Esophagus squamous epithelium (tissue), 5 donors: ENCODE measurements at regions of chr5 and their contacts with region 1.

Region 1: DNA sequence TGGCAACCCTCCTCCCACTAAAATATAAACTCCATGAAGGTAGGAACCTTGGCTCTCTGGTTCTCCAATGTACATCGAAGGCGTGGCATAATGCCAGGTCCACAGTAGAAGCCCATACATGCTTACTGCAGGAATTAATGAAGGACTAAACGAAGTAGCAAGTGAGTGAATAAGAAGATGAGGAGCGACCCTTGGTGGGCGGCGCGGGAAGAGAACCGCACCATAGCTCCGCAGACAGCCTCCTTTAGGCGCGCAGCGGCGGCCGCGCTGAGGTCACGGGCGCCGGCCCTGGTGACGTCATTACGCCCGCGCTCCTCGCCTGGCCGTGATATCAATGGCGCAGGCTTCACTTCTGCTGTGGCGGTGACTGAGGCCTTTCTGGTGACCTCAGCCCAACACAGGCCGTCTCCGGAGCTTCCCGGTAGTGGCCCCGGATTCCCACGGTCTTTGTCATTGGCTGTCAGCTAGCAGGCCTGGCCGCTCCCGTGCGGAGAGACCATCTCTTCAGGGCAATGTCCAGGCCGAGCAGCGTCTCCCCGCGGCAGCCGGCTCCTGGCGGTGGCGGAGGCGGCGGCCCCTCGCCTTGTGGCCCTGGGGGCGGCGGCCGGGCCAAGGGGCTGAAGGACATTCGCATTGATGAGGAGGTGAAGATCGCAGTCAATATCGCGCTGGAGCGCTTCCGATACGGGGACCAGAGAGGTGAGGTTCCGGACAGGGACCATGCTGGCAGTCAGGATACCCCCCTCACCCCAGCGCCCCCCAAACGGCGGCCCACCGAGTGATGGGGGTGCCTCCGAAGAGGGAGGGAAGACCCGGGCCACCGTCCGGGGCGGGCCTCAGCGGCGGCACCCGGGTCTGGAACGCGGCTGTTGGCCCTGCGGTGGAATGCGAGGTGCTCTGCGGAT is at the start of gene YTHDC2:
- DNase-seq: peak; percentile 45
- H3K4me3 ChIP-seq: peak within 1 kb of the TSS; percentile 70 to 97 (median 87)
- H3K27ac ChIP-seq: peak within 1 kb of the TSS; percentile 91 to 97 (median 94)
- H3K4me1 ChIP-seq: peaks cover 6 to 43% (median 8%) of the 10 kb centered on the region in 3 donors
- H3K27me3 ChIP-seq: peaks cover 0 to 5% (median 0%) of the 10 kb centered on the region in 4 donors
- CTCF ChIP-seq: peak in 3 of 6 experiments; percentile 1 to 22 (median 20)
- POLR2A ChIP-seq: peak in 2 of 4 donors; percentile 42 to 72
- total RNA-seq, gene YTHDC2: 12.4 to 33.4 (median 23.7) TPM

Region 2: GRCh38 chr5:113022661-113023060 is 491.0 kb before region 1 on chr5:
- intact Hi-C with region 1: no loop called
- DNase-seq: no peak
- H3K4me3 ChIP-seq: no peak overlapping the region
- H3K27ac ChIP-seq: peak overlapping the region in 1 of 4 donors; percentile 40
- H3K4me1 ChIP-seq: peaks cover 0 to 10% (median 0%) of the 10 kb centered on the region in 3 donors
- H3K27me3 ChIP-seq: no peaks in the 10 kb centered on the region
- CTCF ChIP-seq: no peak
- POLR2A ChIP-seq: no peak

Region 3: DNA sequence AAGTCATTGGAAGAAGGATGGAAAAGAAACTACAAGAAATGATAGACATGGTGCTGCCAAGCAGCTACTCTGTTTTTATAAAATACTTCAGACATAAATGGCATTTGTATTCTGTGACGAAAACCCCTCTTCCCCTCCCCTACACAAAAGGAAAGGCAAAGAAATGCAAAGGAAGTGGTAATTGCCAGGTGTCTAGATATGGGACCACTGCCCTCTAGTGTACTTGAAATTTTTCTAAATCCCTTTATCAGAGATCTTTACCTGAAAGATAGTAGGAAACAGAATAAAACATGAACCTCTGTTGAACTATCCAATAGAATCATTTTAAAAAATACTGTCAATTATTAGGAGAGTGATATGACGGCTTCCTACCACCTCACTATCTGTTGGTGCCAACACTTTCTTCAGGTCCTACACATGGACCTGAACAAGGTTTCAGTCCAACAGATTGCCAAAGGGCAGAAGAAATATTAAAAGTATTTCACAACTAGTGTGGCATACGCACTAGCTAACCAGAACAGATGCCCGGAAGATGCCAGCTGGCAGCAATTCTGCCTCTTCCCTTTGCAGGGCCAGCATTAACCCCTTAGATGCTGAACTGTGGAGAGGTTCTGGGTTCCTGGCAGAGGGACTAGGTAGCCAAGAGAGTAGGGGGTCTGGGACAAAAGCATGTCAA is 183.0 kb before region 1 on chr5:
- intact Hi-C with region 1: loop called (anchors 10 kb)
- DNase-seq: no peak
- H3K4me3 ChIP-seq: no peak overlapping the region
- H3K27ac ChIP-seq: peak overlapping the region in 1 of 4 donors; percentile 9
- H3K4me1 ChIP-seq: peaks cover 0 to 17% (median 7%) of the 10 kb centered on the region in 3 donors
- H3K27me3 ChIP-seq: no peaks in the 10 kb centered on the region
- CTCF ChIP-seq: peak in 5 of 6 experiments; percentile 24 to 57 (median 37)
- POLR2A ChIP-seq: no peak

Region 4: DNA sequence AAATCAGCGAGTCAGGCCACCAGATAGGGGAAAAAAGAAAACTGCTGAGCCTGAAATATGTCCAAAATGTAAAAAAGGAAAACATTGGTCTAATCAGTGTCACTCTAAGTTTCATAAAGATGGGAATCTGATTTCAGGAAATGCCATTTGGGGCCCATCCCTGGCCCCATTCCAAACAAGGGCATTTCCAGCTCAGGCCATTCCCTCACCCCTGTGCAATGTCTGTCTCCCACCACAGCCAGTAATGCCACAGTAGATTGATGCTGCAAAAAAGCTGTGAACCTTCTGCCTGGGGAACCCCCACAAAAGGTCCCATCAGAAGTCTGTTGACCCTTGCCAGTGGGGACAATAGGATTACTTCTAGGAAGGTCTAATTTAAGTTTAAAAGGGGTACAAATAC is 199.4 kb after region 1 on chr5:
- intact Hi-C with region 1: no loop called
- DNase-seq: no peak
- H3K4me3 ChIP-seq: no peak overlapping the region
- H3K27ac ChIP-seq: no peak overlapping the region
- H3K4me1 ChIP-seq: no peaks in the 10 kb centered on the region
- H3K27me3 ChIP-seq: no peaks in the 10 kb centered on the region
- CTCF ChIP-seq: no peak
- POLR2A ChIP-seq: no peak